PC-9 (cell line): ENCODE measurements at regions of chr1 and their contacts with region 1.

Region 1: DNA sequence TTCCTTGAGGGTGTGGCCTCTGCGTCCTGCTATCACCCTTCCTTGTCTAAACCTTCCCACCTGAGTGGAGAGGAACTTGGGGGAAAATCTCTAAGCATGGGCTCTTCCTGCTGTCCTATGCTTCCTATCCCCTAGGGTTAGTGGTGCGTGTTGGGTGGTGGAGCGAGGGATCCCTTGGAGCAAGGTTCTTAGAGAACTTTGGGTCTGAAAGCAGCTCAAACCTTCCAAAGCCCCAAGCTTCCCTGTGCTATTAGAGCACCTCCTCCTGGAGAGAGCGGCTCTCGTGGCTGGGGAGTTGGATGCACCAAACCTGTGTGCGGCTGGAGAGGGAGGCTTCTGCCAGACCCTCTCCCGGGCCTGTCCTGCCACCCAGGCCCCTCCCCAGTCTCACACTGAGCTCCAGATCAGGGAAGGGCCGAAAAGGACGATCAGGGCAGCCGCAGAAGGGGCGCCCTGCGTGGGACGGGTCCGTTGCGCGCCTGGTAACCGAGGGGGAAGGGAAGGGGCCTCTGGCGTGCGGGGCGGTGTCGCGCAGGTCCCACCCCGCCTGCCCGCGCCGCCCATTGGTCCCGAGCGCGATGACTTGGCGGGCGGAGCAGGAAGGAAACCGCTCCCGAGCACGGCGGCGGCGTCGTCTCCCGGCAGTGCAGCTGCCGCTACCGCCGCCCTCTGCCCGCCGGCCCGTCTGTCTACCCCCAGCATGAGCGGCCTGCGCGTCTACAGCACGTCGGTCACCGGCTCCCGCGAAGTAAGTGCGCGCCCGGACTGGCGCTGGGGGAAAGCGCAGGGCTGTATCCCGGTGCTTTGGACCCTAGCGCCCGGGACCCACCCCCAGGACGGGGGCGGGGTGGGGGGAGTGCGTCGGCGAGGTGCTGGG is at the start of gene SH3BGRL3:
- DNase-seq: peak; percentile 61 to 84
- H3K4me3 ChIP-seq: peak within 1 kb of the TSS; percentile 62
- H3K27ac ChIP-seq: peak within 1 kb of the TSS; percentile 63
- H3K4me1 ChIP-seq: peaks cover 63% of the 10 kb centered on the region
- H3K27me3 ChIP-seq: no peaks in the 10 kb centered on the region
- CTCF ChIP-seq: peak; percentile 32; the same call in 1 of the 2 replicates
- total RNA-seq, gene SH3BGRL3: 168 and 206 TPM in 2 replicates

Region 2: GRCh38 chr1:26035959-26036755 is 243.5 kb before region 1 on chr1:
- CTCF ChIA-PET with region 1: no interaction called
- POLR2A ChIA-PET with region 1: no interaction called
- intact Hi-C with region 1: loop called (anchors 5 kb)
- DNase-seq: peak; percentile 53 to 85
- H3K4me3 ChIP-seq: peak overlapping the region; percentile 85
- H3K27ac ChIP-seq: no peak overlapping the region
- H3K4me1 ChIP-seq: peaks cover 9% of the 10 kb centered on the region
- H3K27me3 ChIP-seq: no peaks in the 10 kb centered on the region
- CTCF ChIP-seq: peak; percentile 94

Region 3: GRCh38 chr1:26233903-26234643 is 45.6 kb before region 1 on chr1 and contains the start of gene CEP85:
- CTCF ChIA-PET with region 1: no interaction called
- POLR2A ChIA-PET with region 1: interaction called, 3 read pairs
- intact Hi-C with region 1: loop called (anchors 5 kb)
- DNase-seq: peak; percentile 89 to 98
- H3K4me3 ChIP-seq: peak within 1 kb of the TSS; percentile 84
- H3K27ac ChIP-seq: 0 out of 2 replicates have a peak within 1 kb of the TSS, but pooled peaks have one; percentile 16
- H3K4me1 ChIP-seq: peaks cover 31% of the 10 kb centered on the region
- H3K27me3 ChIP-seq: no peaks in the 10 kb centered on the region
- CTCF ChIP-seq: peak; percentile 80
- total RNA-seq, gene CEP85: 34.0 and 42.5 TPM in 2 replicates

Region 4: DNA sequence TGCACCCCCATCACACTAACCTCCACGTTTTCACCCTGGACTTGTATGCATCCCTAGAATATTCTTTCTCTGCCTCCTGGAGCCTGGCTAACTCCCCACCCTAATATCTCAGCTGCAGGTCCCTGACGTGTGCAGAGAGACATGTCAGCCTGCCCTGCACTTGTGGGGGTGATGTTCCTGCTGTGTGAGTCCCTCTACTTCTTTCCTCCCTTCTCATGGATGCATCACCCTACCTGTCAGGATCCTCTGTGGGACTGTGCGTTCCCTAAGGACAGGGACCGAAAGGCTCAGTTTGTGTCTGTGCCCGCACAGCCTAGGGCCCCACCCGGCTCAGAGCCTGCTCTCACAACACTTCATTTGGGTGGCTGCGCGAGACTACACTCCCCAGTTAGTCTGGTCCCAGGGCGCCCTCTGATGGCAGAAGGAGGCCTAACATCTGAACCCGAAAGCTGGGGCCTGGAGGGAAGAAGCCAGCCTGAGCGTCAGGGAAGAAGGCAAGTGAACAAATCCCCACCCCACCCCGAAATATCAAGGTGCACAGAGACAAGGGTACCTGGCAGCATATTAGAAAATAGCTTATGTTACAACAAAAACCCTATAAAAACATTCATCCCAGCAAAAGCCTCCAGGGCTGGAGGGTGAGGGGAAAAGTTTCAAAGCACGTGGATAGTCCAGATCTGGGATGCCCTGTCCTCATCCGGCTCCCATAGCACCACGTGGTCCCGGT is 41.8 kb after region 1 on chr1:
- CTCF ChIA-PET with region 1: interaction called, 9 read pairs
- POLR2A ChIA-PET with region 1: interaction called, 4 read pairs
- intact Hi-C with region 1: loop called (anchors 1 kb)
- DNase-seq: peak; percentile 42 to 86
- H3K4me3 ChIP-seq: no peak overlapping the region
- H3K27ac ChIP-seq: no peak overlapping the region
- H3K4me1 ChIP-seq: no peaks in the 10 kb centered on the region
- H3K27me3 ChIP-seq: no peaks in the 10 kb centered on the region
- CTCF ChIP-seq: peak; percentile 80

Region 5: DNA sequence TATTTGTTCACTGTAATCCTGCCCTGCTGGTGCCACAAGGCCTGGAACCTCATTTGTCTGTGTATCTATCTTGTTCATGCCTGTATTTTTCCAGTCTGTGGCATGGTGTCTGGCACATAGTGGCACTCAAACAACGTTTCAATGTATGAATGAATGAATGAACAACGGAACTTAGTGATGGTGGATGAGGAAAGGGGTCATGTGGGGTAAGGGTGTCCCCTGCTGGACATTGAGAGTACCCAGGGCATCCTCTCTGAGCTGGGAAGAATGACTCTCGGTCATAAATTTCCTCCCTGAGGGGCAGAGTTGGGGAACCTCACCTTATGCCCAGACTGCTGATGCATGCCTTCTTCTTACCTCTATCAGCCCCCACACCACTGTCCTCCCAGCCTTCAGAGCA is 111.8 kb after region 1 on chr1:
- CTCF ChIA-PET with region 1: interaction called, 5 read pairs
- POLR2A ChIA-PET with region 1: no interaction called
- intact Hi-C with region 1: loop called (anchors 1 kb)
- DNase-seq: peak; percentile 43 to 46
- H3K4me3 ChIP-seq: no peak overlapping the region
- H3K27ac ChIP-seq: no peak overlapping the region
- H3K4me1 ChIP-seq: peaks cover 5% of the 10 kb centered on the region; the same call in 1 of the 2 replicates
- H3K27me3 ChIP-seq: no peaks in the 10 kb centered on the region
- CTCF ChIP-seq: peak; percentile 78